Activated CD8-positive, alpha-beta T cell treated with anti-CD3 and anti-CD28 coated beads for 36 hours (primary cell): ENCODE measurements at regions of chrX and their contacts with region 1.

Region 1: DNA sequence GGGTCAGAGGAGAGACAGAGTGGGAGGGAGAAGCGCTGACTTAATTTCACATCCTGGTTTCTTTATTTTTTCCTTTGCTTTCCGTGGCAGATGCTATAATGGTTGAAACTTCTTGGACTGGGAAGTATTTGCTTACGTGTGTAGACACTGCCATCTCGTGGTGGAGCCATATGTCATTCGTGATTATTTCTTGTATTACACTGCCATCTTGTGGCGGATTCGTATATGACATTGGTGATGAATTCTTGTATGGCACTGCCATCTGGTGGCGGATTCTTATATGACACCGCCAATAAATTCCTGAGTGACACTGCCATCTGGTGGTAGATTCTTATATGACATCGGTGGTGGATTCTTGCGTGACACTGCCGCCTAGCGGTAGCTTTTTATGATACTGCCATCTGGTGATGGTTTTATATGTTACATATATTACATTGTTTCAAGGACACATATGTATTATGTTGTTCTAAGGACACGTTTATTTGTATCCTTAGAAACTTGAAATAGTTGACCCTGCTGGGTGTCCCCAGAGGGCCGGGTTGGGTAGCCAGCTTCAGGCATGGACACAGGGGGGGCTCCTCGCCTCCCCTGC is 37.3 kb upstream of the CLCN4 start:
- DNase-seq: peak; percentile 75
- ATAC-seq: peak; percentile 77
- H3K4me3 Mint-ChIP-seq: no peak overlapping the region
- H3K27ac Mint-ChIP-seq: peak overlapping the region; percentile 59
- H3K4me1 Mint-ChIP-seq: peaks cover 48% of the 10 kb centered on the region
- H3K27me3 Mint-ChIP-seq: no peaks in the 10 kb centered on the region
- CTCF ChIP-seq: peak; percentile 100

Region 2: DNA sequence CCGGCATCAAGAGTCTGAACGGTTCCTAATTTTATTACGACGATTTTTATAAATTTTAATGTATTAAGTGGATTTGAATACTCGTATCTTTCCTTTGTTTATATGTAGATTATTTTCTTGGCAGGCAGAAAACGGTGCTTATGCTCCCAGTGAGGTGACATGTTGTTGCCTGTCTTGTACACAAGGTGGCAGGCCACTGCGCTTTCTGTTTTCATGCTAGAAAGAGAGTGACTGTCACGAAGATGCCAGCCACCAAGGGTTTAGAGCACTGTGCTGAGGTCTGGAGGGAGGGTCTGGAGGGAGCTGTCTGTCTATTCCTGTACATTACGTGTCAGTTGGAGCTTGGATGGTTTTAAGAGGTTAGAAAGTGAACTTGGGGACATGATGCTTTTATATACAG is 245.5 kb before region 1 on chrX:
- CTCF ChIA-PET with region 1: interaction called, 8 read pairs
- POLR2A ChIA-PET with region 1: no interaction called
- intact Hi-C with region 1: loop called (anchors 5 kb)
- DNase-seq: peak; percentile 52
- ATAC-seq: peak; percentile 69
- H3K4me3 Mint-ChIP-seq: no peak overlapping the region
- H3K27ac Mint-ChIP-seq: no peak overlapping the region
- H3K4me1 Mint-ChIP-seq: peaks cover 7% of the 10 kb centered on the region
- H3K27me3 Mint-ChIP-seq: peaks cover 9% of the 10 kb centered on the region
- CTCF ChIP-seq: peak; percentile 44

Region 3: GRCh38 chrX:9988762-9989161 is 130.7 kb before region 1 on chrX:
- CTCF ChIA-PET with region 1: interaction called, 244 read pairs
- POLR2A ChIA-PET with region 1: interaction called, 5 read pairs
- intact Hi-C with region 1: no loop called
- DNase-seq: no peak
- ATAC-seq: no peak
- H3K4me3 Mint-ChIP-seq: no peak overlapping the region
- H3K27ac Mint-ChIP-seq: no peak overlapping the region
- H3K4me1 Mint-ChIP-seq: no peaks in the 10 kb centered on the region
- H3K27me3 Mint-ChIP-seq: no peaks in the 10 kb centered on the region
- CTCF ChIP-seq: peak; percentile 27

Region 4: GRCh38 chrX:10014462-10015356 is 104.8 kb before region 1 on chrX:
- CTCF ChIA-PET with region 1: interaction called, 17 read pairs
- POLR2A ChIA-PET with region 1: interaction called, 3 read pairs
- intact Hi-C with region 1: loop called (anchors 5 kb)
- DNase-seq: peak; percentile 68
- ATAC-seq: peak; percentile 87
- H3K4me3 Mint-ChIP-seq: peak overlapping the region; percentile 63
- H3K27ac Mint-ChIP-seq: peak overlapping the region; percentile 77
- H3K4me1 Mint-ChIP-seq: peaks cover 46% of the 10 kb centered on the region
- H3K27me3 Mint-ChIP-seq: peaks cover 4% of the 10 kb centered on the region
- CTCF ChIP-seq: no peak

Region 5: DNA sequence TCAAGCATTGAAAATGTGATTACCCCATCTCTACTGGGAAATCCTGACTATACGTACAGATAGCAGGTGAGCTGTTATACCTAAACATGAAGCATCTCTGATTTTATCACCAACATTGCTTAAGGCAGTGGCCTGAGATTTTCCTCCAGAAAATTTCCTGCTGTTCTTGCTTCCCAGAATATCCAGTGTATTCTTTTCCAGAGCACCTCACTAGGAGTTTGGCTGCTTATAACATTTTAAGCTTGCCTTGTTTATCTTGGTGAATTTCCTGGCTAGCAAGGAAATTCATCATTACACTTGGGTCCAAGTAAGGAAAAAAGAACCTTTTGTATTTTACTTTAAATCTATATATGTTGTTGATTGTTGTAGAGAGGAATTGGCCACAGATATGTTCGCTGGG is 35.7 kb before region 1 on chrX:
- CTCF ChIA-PET with region 1: interaction called, 10 read pairs
- POLR2A ChIA-PET with region 1: interaction called, 3 read pairs
- intact Hi-C with region 1: loop called (anchors 5 kb)
- DNase-seq: no peak
- ATAC-seq: no peak
- H3K4me3 Mint-ChIP-seq: no peak overlapping the region
- H3K27ac Mint-ChIP-seq: no peak overlapping the region
- H3K4me1 Mint-ChIP-seq: peaks cover 50% of the 10 kb centered on the region
- H3K27me3 Mint-ChIP-seq: no peaks in the 10 kb centered on the region
- CTCF ChIP-seq: no peak

Region 6: DNA sequence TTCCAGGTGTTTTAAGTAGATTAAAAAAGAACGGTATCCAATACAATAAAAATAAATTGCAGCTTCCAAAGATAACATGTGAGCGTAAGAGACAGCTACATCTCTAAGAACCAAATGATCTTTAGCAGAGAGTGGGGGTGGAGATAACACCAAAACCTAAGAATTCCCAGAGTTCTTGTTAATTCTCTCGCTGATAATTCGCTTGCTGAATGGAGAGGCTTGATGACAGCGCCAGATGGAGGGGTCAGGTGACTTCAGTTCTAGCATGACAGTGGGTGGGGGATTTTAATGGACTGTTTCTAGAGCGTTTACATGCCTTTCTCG is 39.6 kb after region 1 on chrX:
- CTCF ChIA-PET with region 1: no interaction called
- POLR2A ChIA-PET with region 1: no interaction called
- intact Hi-C with region 1: no loop called
- DNase-seq: no peak
- ATAC-seq: no peak
- H3K4me3 Mint-ChIP-seq: no peak overlapping the region
- H3K27ac Mint-ChIP-seq: no peak overlapping the region
- H3K4me1 Mint-ChIP-seq: peaks cover 11% of the 10 kb centered on the region
- H3K27me3 Mint-ChIP-seq: peaks cover 43% of the 10 kb centered on the region
- CTCF ChIP-seq: no peak

Region 7: DNA sequence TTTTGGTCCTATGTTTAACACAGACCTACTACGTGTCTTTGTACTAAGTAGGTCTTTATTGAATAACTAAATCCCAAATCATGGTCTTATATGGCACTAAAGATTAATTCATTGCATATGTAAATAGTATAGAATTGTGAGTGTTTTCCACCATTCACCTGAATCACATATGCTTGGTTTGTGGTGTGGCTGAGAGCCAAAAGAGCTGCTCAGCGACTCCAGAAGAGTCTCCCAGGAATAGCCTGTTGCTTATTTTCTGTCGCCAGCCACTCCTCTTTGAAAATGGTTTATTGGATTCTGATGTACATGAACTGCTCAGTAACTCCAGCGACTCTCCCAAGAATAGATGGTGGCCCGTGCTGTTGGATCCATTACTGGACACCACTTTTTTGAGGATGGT is 221.8 kb after region 1 on chrX:
- CTCF ChIA-PET with region 1: no interaction called
- POLR2A ChIA-PET with region 1: no interaction called
- intact Hi-C with region 1: no loop called
- DNase-seq: no peak
- ATAC-seq: no peak
- H3K4me3 Mint-ChIP-seq: no peak overlapping the region
- H3K27ac Mint-ChIP-seq: no peak overlapping the region
- H3K4me1 Mint-ChIP-seq: no peaks in the 10 kb centered on the region
- H3K27me3 Mint-ChIP-seq: no peaks in the 10 kb centered on the region
- CTCF ChIP-seq: no peak